CD4-positive, alpha-beta memory T cell (primary cell): ENCODE measurements at regions of chr6 and their contacts with region 1.

Region 1: GRCh38 chr6:33248925-33249731 is 22.5 kb downstream of the VPS52 start:
- DNase-seq: peak; percentile 94 to 98 (median 97)
- H3K4me3 ChIP-seq: peak overlapping the region; percentile 60 to 65
- H3K4me3 Mint-ChIP-seq: peak overlapping the region; percentile 84 to 95 (median 88)
- H3K27ac ChIP-seq: peak overlapping the region; percentile 93
- H3K27ac Mint-ChIP-seq: peak overlapping the region; percentile 90 to 98 (median 97)
- H3K4me1 ChIP-seq: peaks cover 26% of the 10 kb centered on the region
- H3K4me1 Mint-ChIP-seq: peaks cover 19 to 47% (median 30%) of the 10 kb centered on the region in 4 donors
- H3K27me3 ChIP-seq: no peaks in the 10 kb centered on the region
- H3K27me3 Mint-ChIP-seq: peaks cover 0 to 3% of the 10 kb centered on the region in 2 donors

Region 2: GRCh38 chr6:33118525-33119123 is 130.5 kb before region 1 on chr6:
- CTCF ChIA-PET with region 1: interaction called, 40 read pairs
- POLR2A ChIA-PET with region 1: interaction called, 7 read pairs
- intact Hi-C with region 1: loop called (anchors 1 kb)
- DNase-seq: peak in 4 of 5 donors; percentile 65 to 72 (median 69)
- H3K4me3 ChIP-seq: no peak overlapping the region
- H3K4me3 Mint-ChIP-seq: no peak overlapping the region
- H3K27ac ChIP-seq: no peak overlapping the region
- H3K27ac Mint-ChIP-seq: peak overlapping the region in 1 of 7 donors; percentile 26
- H3K4me1 ChIP-seq: no peaks in the 10 kb centered on the region
- H3K4me1 Mint-ChIP-seq: peaks cover 0 to 13% (median 5%) of the 10 kb centered on the region in 4 donors
- H3K27me3 ChIP-seq: peaks cover 13% of the 10 kb centered on the region
- H3K27me3 Mint-ChIP-seq: peaks cover 42 to 50% of the 10 kb centered on the region in 2 donors

Region 3: DNA sequence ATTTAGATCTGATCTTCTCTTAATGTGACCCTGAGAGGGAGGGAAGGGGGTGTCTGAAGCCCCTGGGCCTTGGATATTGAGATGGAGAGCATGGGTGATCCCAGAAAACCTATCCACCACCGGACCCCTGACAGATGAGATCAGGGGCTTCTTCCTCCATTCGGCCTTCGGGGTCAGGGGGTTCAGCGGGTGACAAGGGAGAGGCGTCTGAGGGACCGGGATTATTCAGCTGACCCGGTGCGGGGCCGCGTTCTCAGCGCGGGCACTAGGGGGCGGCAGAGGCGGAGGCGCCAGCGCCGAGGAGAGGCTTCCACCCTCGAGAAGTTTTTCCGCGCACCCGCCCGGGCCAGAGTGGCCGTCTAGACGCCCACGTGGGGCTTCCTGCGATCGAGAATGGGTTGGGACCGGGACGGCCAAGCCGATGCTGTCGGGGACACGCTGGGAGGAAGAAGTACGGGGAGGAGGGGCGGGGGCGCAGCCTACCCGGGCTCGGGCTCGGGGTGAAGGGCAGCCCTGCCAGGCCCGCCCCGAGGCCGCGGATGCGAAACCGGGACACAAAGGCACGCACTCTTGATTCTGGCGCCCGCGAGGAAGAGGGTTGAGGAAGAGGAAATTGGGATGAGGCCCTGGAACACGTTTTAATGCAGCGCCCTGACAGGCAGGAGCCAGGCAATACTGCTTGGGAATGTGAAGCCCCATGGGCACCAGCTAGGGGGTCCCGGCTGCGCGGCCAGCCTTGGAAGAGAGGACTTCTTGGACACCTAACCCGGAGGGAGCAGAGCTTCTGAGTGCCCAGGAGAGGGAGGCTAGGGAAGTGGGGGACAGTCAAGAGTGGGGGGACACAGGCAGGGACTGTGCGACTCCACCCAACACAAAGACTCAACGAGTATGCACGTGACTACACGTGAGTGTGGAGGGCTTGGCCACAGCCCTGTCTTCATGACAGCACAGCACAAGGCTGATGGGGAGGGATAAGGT is 87.5 kb before region 1 on chr6:
- CTCF ChIA-PET with region 1: interaction called, 105 read pairs
- POLR2A ChIA-PET with region 1: interaction called, 60 read pairs
- intact Hi-C with region 1: loop called (anchors 1 kb)
- DNase-seq: peak; percentile 75 to 84 (median 77)
- H3K4me3 ChIP-seq: peak overlapping the region; percentile 23 to 54
- H3K4me3 Mint-ChIP-seq: peak overlapping the region; percentile 83 to 92 (median 89)
- H3K27ac ChIP-seq: no peak overlapping the region
- H3K27ac Mint-ChIP-seq: peak overlapping the region in 6 of 7 donors; percentile 45 to 91 (median 86)
- H3K4me1 ChIP-seq: peaks cover 5% of the 10 kb centered on the region
- H3K4me1 Mint-ChIP-seq: peaks cover 1 to 11% (median 8%) of the 10 kb centered on the region in 4 donors
- H3K27me3 ChIP-seq: no peaks in the 10 kb centered on the region
- H3K27me3 Mint-ChIP-seq: peaks cover 2 to 8% of the 10 kb centered on the region in 2 donors

Region 4: DNA sequence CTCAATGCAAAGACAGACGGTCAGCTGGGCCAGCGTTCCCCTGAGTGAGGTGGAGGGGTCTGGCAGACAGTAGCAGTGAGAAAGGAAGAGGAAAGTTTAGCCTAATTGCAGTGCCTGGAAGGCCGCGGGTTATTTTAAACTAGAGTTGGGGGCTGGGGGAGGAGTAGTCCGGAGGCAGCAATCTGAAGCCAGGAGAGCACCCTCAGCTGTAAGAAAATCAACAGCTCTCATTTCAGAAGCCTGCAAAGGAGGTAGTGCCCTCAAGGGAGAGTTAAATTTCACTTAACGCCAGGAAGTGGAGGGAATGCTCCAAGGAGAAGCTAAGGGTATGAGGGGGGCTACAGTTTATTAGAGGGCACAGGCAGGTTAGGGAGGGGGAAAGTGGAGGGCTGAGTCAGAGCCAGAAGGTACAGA is 13.9 kb before region 1 on chr6:
- CTCF ChIA-PET with region 1: interaction called, 13 read pairs
- POLR2A ChIA-PET with region 1: interaction called, 5 read pairs
- intact Hi-C with region 1: no loop called
- DNase-seq: no peak
- H3K4me3 ChIP-seq: no peak overlapping the region
- H3K4me3 Mint-ChIP-seq: no peak overlapping the region
- H3K27ac ChIP-seq: no peak overlapping the region
- H3K27ac Mint-ChIP-seq: no peak overlapping the region
- H3K4me1 ChIP-seq: no peaks in the 10 kb centered on the region
- H3K4me1 Mint-ChIP-seq: no peaks in the 10 kb centered on the region
- H3K27me3 ChIP-seq: no peaks in the 10 kb centered on the region
- H3K27me3 Mint-ChIP-seq: peaks cover 16 to 27% of the 10 kb centered on the region in 2 donors

Region 5: DNA sequence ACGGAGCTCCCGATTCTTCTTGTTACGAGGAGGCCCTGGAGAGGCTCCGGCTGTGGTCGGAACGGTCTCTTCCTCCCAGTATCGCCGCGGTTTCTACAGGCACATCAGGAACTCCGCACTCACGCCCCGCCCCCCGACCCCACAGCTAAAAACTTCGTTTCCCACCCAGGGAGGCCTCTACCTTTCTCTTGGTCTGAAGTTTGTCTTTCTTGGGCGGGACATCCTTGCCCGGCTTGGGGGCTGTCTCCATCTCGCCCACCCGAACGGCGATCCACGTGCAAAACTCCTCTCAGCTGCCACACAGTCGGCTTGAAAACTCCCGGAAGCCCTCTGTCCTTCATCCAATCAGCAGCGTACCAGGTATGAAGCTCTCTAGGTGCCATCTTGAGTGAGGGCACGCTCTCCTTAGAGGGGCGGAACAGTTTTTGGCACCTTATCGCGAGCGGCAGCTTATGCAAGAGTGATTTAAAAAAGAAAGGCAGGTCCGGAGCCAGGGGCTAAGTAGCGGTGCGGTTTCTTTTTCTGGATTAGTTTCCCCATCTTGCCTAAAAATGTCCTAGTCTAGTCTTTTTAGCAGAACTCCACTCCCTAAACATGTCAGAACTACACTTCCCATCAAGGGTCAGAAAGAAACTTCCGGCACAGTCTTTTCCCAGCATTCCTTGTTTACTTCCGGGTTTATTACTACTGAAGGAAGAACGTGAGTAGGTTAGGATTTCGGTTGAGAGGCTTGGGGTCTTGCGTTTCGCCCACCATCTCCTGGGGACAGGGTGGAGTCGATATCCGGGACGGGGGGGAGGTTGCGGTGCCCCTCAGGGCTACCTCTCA is 40.0 kb after region 1 on chr6 and contains the starts of genes PFDN6 and WDR46:
- CTCF ChIA-PET with region 1: interaction called, 7 read pairs
- POLR2A ChIA-PET with region 1: interaction called, 22 read pairs
- intact Hi-C with region 1: no loop called
- DNase-seq: peak; percentile 87 to 92 (median 89)
- H3K4me3 ChIP-seq: peak within 1 kb of the TSS; percentile 73 to 84
- H3K4me3 Mint-ChIP-seq: peak within 1 kb of the TSS; percentile 96 to 100 (median 98)
- H3K27ac ChIP-seq: peak within 1 kb of the TSS; percentile 71
- H3K27ac Mint-ChIP-seq: peak within 1 kb of the TSS; percentile 79 to 98 (median 95)
- H3K4me1 ChIP-seq: peaks cover 30% of the 10 kb centered on the region
- H3K4me1 Mint-ChIP-seq: peaks cover 24 to 48% (median 36%) of the 10 kb centered on the region in 4 donors
- H3K27me3 ChIP-seq: no peaks in the 10 kb centered on the region
- H3K27me3 Mint-ChIP-seq: no peaks in the 10 kb centered on the region
- total RNA-seq, gene PFDN6: 43.6 to 45.5 TPM
- total RNA-seq, gene WDR46: 60.8 to 66.1 TPM

Region 6: DNA sequence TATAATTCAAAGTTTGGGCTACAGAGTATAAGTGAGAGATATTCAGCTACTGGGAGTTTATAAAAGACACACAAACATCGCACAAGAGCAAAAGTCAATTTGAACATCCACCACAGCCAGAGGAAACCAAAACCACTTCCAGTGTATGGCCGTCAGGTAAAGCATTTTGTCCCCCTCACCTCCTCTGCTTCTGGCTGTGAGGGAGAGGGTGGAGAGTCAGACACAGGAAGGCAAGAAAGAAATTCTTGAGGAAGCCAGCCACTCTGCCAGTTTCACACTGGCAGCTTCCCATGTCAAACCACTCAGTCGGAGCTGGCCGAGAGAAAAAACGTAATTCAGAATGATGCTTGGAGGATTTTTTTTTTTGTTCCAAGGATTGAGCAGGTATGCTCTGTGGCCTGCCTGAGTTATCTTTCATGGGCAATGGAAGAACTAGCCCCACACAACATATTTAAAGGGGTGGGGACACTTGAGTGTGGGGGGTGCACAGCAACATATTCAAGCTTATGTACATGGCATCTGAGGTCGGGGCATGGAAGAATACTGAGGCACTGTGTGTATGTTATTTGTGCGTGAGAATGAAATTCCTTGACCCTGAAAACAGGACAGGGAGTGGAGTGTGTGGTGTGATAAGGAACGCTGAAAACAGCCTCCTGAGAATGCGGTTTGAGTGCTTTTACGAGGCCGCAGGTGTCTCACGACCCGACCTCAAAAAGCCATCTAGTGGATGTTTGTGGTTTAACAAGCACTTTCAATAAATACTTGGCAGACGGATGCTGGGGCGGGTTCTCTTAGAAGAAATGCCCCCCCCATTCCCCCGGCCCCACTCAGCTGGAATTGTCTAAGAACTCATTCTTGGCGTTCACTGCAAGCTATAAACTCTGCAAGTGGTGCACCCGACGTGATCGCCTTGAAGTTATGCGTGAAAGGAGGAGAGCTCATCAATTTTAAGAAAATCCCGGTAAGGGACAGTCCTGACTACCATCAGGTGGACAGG is 95.9 kb after region 1 on chr6:
- CTCF ChIA-PET with region 1: interaction called, 7 read pairs
- POLR2A ChIA-PET with region 1: interaction called, 44 read pairs
- intact Hi-C with region 1: loop called (anchors 1 kb)
- DNase-seq: peak; percentile 81 to 87 (median 84)
- H3K4me3 ChIP-seq: peak overlapping the region; percentile 11 to 61
- H3K4me3 Mint-ChIP-seq: peak overlapping the region; percentile 76 to 92 (median 85)
- H3K27ac ChIP-seq: peak overlapping the region; percentile 79
- H3K27ac Mint-ChIP-seq: peak overlapping the region; percentile 88 to 99 (median 98)
- H3K4me1 ChIP-seq: peaks cover 44% of the 10 kb centered on the region
- H3K4me1 Mint-ChIP-seq: peaks cover 23 to 49% (median 37%) of the 10 kb centered on the region in 4 donors
- H3K27me3 ChIP-seq: no peaks in the 10 kb centered on the region
- H3K27me3 Mint-ChIP-seq: no peaks in the 10 kb centered on the region

Region 7: GRCh38 chr6:33430991-33431879 is 182.1 kb after region 1 on chr6:
- CTCF ChIA-PET with region 1: no interaction called
- POLR2A ChIA-PET with region 1: interaction called, 15 read pairs
- intact Hi-C with region 1: no loop called
- DNase-seq: peak; percentile 82 to 91 (median 84)
- H3K4me3 ChIP-seq: peak overlapping the region; percentile 11 to 54
- H3K4me3 Mint-ChIP-seq: peak overlapping the region; percentile 71 to 94 (median 90)
- H3K27ac ChIP-seq: peak overlapping the region; percentile 76
- H3K27ac Mint-ChIP-seq: peak overlapping the region; percentile 94 to 99 (median 98)
- H3K4me1 ChIP-seq: peaks cover 53% of the 10 kb centered on the region
- H3K4me1 Mint-ChIP-seq: peaks cover 48 to 66% (median 60%) of the 10 kb centered on the region in 4 donors
- H3K27me3 ChIP-seq: no peaks in the 10 kb centered on the region
- H3K27me3 Mint-ChIP-seq: no peaks in the 10 kb centered on the region